ENCODE measurements at regions of chr7 and their contacts with region 1.

Region 1: DNA sequence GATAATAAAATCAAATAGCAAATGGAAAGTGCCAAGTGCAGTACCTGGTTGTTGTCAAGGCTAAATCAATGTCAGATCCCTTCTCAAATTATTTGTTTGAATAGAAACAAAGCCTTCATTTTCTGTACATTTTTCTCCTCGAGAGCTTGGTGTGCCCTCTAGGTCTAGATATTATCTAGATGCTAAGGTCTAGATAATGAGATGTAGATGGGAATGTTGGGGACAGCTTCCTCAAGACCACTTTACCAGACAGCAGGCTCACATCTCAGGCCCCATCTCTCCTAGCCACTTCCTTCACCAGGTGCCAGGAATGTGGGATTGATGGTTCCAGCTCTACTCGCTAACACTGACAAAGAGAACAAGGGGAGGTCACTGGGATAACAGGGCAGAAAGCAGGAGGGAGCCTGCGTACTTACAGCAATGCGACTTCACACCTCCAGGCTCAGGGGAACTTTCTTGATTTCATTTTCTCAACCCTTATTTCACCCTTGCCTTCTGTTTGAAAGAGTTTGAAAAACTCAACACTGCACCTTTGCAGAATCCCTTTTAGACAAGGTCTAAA is 451.4 kb upstream of the VSTM2A start:
- DNase-seq: no peak
- ATAC-seq: no peak
- H3K4me3 ChIP-seq: no peak overlapping the region
- H3K27ac ChIP-seq: no peak overlapping the region
- H3K4me1 ChIP-seq: no peaks in the 10 kb centered on the region
- H3K27me3 ChIP-seq: no peaks in the 10 kb centered on the region
- CTCF ChIP-seq: no peak
- EP300 ChIP-seq: no peak
- POLR2A ChIP-seq: no peak
- RAD21 ChIP-seq: no peak

Region 2: DNA sequence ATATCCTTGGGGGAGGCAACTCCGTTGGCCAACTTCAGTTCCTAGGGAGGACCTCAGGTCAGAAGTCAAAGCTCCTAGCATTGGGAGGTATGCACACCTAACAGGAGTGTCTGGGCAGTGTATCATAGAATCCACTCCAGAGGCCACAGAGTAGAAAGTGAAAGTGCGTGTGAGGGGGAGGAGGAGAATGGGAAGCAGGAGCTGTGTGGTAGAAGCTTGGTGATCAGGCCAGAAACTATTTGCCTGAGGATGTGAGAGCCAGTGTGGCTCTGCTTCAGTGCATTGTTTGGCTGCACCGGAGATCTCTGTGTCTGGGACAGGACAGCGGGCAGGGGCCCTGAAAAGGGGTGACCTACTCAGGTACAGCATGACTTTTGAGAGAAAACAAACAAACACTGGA is 106.0 kb before region 1 on chr7:
- CTCF ChIA-PET with region 1: no interaction called
- POLR2A ChIA-PET with region 1: no interaction called
- in situ Hi-C with region 1: no loop called
- intact Hi-C with region 1: no loop called
- DNase-seq: no peak
- ATAC-seq: no peak
- H3K4me3 ChIP-seq: no peak overlapping the region
- H3K27ac ChIP-seq: no peak overlapping the region
- H3K4me1 ChIP-seq: no peaks in the 10 kb centered on the region
- H3K27me3 ChIP-seq: no peaks in the 10 kb centered on the region
- CTCF ChIP-seq: no peak
- EP300 ChIP-seq: no peak
- POLR2A ChIP-seq: no peak
- RAD21 ChIP-seq: no peak

Region 3: GRCh38 chr7:54066643-54067042 is 24.1 kb before region 1 on chr7:
- CTCF ChIA-PET with region 1: no interaction called
- POLR2A ChIA-PET with region 1: no interaction called
- in situ Hi-C with region 1: no loop called
- intact Hi-C with region 1: loop called (anchors 2 kb)
- DNase-seq: no peak
- ATAC-seq: no peak
- H3K4me3 ChIP-seq: no peak overlapping the region
- H3K27ac ChIP-seq: no peak overlapping the region
- H3K4me1 ChIP-seq: no peaks in the 10 kb centered on the region
- H3K27me3 ChIP-seq: no peaks in the 10 kb centered on the region
- CTCF ChIP-seq: no peak
- EP300 ChIP-seq: no peak
- POLR2A ChIP-seq: no peak
- RAD21 ChIP-seq: no peak

Region 4: DNA sequence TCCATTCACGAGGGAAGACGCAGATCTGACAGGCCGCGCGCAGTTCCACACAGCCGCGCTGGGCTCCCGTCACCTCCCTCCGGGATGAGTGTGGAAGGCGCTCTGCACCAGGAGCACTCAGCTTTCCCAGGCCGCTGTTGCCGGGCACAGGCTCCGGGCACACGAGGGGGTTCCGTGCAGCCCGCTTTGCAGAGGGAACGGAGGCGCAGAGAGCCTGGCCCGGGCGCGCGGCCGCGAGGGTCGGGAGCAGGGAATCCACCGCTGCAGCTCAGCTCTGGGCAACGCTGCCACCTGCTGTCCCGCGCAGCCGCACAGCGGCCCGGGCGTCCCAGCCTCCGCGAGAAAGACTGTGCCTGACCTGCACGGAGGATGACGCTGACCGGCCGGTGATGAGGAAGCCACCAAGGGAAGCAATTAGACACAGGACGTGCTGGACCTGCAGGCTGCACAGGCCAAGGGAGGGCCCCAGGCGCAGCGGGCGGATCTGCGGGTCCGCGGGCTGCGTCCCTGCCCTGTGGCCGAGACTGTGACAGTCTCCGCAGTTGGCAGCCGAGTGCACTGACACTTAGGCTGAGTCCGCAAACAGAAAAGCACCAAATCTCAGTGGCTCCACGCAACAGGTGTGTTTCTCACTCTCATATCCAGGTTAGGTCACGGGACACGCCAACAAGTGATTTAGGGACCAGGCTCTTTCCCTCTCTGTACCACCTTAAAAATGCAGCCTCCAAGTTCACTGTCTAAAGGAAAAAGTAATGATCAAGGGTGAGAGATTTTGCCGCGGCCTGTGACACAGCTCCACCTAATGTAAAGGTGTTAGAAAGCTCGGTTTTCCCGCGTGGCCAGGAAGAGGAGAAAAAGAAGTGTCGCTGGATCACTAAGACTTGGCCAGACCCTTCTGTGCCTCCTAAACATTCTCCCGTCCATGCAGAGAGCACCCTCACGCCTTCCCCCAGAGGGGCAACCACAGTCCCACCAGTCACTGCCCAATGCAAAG is 573.8 kb after region 1 on chr7:
- CTCF ChIA-PET with region 1: no interaction called
- POLR2A ChIA-PET with region 1: no interaction called
- in situ Hi-C with region 1: no loop called
- intact Hi-C with region 1: no loop called
- DNase-seq: peak; percentile 40
- ATAC-seq: peak; percentile 99
- H3K4me3 ChIP-seq: peak overlapping the region in 2 of 3 experiments; percentile 37 to 64; a peak in 4 of 6 replicates
- H3K27ac ChIP-seq: no peak overlapping the region
- H3K4me1 ChIP-seq: peaks cover 5% of the 10 kb centered on the region; the same call in 1 of the 2 replicates
- H3K27me3 ChIP-seq: peaks cover 0 to 27% of the 10 kb centered on the region in 2 experiments; a peak in 3 of 5 replicates
- CTCF ChIP-seq: peak; percentile 94
- EP300 ChIP-seq: no peak
- POLR2A ChIP-seq: no peak
- RAD21 ChIP-seq: peak; percentile 65